Activated CD8-positive, alpha-beta memory T cell treated with anti-CD3 and anti-CD28 coated beads, Interleukin-2, amount 10 ng/mL, durations not matched to agents 7 days and 5 days (primary cell): ENCODE measurements at regions of chr12 and their contacts with region 1.

Region 1: DNA sequence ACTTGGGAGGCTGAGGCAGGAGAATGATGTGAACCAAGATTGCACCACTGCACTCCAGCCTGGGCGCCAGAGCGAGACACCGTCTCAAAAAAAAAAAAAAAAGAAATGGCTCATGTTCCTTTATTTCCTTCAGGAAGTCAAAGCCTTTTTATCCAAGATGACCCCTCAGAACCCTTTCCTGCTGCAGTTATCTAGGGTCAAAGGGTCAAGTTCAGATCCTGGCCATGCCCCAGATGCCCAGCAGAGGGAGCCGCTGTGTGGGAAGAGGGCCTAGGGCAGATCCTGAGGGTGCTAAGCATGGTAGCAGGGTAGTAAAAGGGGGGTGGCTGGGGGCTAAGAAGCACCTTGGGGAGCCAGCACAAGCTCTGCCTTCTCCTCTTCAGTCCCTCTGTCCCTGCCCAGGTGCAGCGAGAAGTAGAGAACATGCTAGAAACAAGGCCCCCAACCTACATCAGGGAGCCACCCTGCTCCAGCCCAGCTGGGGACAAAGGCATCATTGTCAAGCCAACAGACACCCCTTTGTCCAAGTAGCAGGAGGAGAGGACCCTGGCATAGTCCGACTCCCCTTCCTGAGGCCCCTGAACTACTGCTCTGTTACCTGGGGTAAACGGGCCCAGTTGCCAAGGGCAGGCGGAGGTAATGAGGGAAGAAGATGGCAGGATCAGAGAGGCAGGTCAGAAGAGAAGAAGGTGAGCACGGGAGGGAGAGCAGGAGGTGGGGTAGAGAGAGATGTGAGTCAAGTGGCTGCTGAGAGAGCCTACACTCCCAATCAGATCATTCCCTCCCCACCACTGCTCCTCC is 6.5 kb downstream of the NFE2 start:
- DNase-seq: peak; percentile 79
- ATAC-seq: peak; percentile 66
- H3K4me3 Mint-ChIP-seq: no peak overlapping the region
- H3K27ac Mint-ChIP-seq: no peak overlapping the region
- H3K4me1 Mint-ChIP-seq: peaks cover 2% of the 10 kb centered on the region
- H3K27me3 Mint-ChIP-seq: peaks cover 24% of the 10 kb centered on the region

Region 2: DNA sequence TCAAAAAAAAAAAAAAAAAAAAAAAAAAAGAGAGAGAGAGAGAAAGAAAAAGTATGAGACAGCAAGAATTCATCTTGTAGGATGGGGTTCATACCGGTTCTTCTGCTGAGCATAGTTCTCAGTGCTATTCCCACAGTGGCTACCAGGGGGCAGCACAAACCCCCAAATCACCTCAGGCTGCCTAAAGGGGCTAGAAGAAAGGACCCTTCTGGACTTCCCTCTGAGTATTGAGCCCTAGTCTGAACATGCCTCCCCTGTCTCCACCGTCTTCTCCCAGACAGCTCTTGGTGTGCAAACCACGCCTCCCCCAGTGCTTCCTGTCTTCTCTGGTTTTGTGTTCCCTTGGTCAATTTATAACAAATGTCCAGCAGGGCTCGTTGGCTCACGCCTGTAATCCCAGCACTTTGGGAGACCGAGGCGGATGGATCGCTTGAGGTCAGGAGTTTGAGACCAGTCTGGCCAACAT is 74.2 kb before region 1 on chr12:
- CTCF ChIA-PET with region 1: interaction called, 12 read pairs
- DNase-seq: peak; percentile 81
- ATAC-seq: peak; percentile 56
- H3K4me3 Mint-ChIP-seq: no peak overlapping the region
- H3K27ac Mint-ChIP-seq: no peak overlapping the region
- H3K4me1 Mint-ChIP-seq: peaks cover 32% of the 10 kb centered on the region
- H3K27me3 Mint-ChIP-seq: peaks cover 7% of the 10 kb centered on the region

Region 3: GRCh38 chr12:54279866-54280467 is 14.4 kb before region 1 on chr12 and contains the start of gene CBX5:
- CTCF ChIA-PET with region 1: interaction called, 21 read pairs
- DNase-seq: peak; percentile 100
- ATAC-seq: peak; percentile 59
- H3K4me3 Mint-ChIP-seq: no peak within 1 kb of the TSS
- H3K27ac Mint-ChIP-seq: no peak within 1 kb of the TSS
- H3K4me1 Mint-ChIP-seq: peaks cover 55% of the 10 kb centered on the region
- H3K27me3 Mint-ChIP-seq: no peaks in the 10 kb centered on the region
- total RNA-seq, gene CBX5: 102 to 113 TPM

Region 4: DNA sequence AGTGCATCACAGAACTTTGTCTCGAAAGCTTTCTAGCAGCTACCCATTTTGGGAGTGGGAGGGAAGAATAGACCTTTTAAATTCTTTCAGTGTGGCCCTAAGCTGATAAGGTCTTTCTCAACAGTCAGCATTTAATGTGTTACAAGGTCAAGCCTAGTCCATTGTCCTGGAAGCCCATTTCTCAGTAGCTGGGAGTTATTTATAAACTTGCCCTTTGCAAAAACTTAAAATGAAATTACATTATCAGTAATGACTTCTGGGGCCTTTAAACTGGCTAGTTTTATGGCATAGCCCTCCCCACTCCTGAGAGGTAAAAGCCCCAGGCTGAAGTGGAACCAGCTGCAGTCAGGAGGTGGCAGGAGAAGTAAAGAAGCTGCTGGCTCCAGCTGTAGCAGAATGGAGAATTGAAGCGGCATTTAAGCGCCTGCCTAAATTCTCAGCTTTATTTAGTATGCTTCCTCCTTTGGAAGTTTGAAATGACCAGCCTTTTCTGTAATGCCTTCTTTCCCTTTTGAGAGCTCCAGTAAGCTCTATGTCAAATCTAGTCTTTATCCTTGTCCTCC is 43.0 kb after region 1 on chr12:
- CTCF ChIA-PET with region 1: interaction called, 36 read pairs
- DNase-seq: no peak
- ATAC-seq: no peak
- H3K4me3 Mint-ChIP-seq: no peak overlapping the region
- H3K27ac Mint-ChIP-seq: no peak overlapping the region
- H3K4me1 Mint-ChIP-seq: peaks cover 3% of the 10 kb centered on the region
- H3K27me3 Mint-ChIP-seq: no peaks in the 10 kb centered on the region